ENCODE measurements at regions of chrX and their contacts with region 1.

Region 1: DNA sequence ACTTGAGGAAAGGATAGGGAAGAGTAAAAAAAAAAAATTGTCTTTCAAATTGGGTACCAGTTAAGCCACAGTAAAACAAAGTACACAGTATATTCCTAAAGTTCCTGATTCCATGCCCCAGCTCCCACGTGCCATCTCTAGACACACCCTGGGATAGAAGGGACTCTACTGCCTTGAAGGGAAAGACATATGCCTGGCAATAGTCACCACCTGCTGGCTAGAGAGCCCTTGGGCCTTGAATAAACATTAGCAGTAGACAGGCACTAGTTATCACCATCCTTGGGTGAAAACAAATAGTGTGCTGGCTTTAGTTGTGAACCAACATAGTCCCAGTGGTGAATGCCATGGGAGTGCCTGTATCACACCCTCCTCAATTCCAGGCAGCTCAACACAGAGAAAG is 44.9 kb downstream of the KLHL4 start:
- DNase-seq: no peak
- ATAC-seq: no peak
- H3K4me3 ChIP-seq: no peak overlapping the region
- H3K4me3 Mint-ChIP-seq: no peak overlapping the region
- H3K27ac ChIP-seq: no peak overlapping the region
- H3K27ac Mint-ChIP-seq: no peak overlapping the region
- H3K4me1 ChIP-seq: no peaks in the 10 kb centered on the region
- H3K4me1 Mint-ChIP-seq: no peaks in the 10 kb centered on the region
- H3K27me3 ChIP-seq: no peaks in the 10 kb centered on the region
- H3K27me3 Mint-ChIP-seq: no peaks in the 10 kb centered on the region
- CTCF ChIP-seq: no peak

Region 2: DNA sequence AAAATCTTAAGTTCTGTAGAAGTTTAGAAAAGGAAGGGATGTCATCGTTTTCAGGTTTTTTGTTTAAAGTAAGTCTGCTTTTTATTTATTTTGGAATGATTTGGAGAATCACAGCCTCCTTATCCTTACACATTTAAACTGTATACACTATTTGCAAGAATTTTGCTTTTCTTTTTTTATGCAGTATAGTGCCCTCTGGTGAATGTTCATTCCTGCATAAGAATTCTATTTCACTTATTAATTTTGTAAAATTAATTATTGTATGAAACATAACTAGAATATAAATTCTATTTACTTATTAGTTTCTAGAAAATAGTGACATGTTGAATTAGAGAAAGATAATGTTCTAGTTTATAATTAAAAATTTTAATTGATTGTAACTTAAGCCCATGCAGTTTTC is 1369.7 kb before region 1 on chrX:
- CTCF ChIA-PET with region 1: no interaction called
- POLR2A ChIA-PET with region 1: no interaction called
- intact Hi-C with region 1: no loop called
- DNase-seq: no peak
- ATAC-seq: no peak
- H3K4me3 ChIP-seq: no peak overlapping the region
- H3K4me3 Mint-ChIP-seq: no peak overlapping the region
- H3K27ac ChIP-seq: no peak overlapping the region
- H3K27ac Mint-ChIP-seq: no peak overlapping the region
- H3K4me1 ChIP-seq: no peaks in the 10 kb centered on the region
- H3K4me1 Mint-ChIP-seq: no peaks in the 10 kb centered on the region
- H3K27me3 ChIP-seq: no peaks in the 10 kb centered on the region
- H3K27me3 Mint-ChIP-seq: no peaks in the 10 kb centered on the region
- CTCF ChIP-seq: no peak

Region 3: DNA sequence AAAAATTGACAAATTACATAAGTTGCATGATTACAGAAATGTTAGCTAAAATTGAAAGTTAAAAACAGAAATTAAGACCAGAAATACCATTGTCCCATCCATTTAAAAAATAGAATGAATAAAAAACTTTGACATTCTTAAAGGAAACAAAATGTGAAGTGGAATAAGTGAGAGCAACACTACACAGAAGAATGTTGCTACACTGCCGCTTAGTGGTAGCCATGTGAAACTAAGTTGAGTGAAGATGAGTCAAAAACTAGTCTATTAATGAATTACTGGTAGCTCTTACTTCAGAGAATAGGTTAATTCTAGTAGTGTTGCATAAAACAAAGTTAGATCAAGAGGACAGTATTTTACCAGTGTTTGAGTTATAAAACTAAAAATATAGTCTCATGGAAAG is 616.0 kb before region 1 on chrX:
- CTCF ChIA-PET with region 1: no interaction called
- POLR2A ChIA-PET with region 1: no interaction called
- intact Hi-C with region 1: loop called (anchors 5 kb)
- DNase-seq: peak; percentile 1
- ATAC-seq: no peak
- H3K4me3 ChIP-seq: no peak overlapping the region
- H3K4me3 Mint-ChIP-seq: no peak overlapping the region
- H3K27ac ChIP-seq: no peak overlapping the region
- H3K27ac Mint-ChIP-seq: no peak overlapping the region
- H3K4me1 ChIP-seq: no peaks in the 10 kb centered on the region
- H3K4me1 Mint-ChIP-seq: no peaks in the 10 kb centered on the region
- H3K27me3 ChIP-seq: no peaks in the 10 kb centered on the region
- H3K27me3 Mint-ChIP-seq: no peaks in the 10 kb centered on the region
- CTCF ChIP-seq: peak; percentile 18

Measured in B cell (primary cell).